ENCODE measurements at regions of chr11 and their contacts with region 1.

Region 1: GRCh38 chr11:3854977-3855807 is at the start of gene STIM1:
- DNase-seq: peak; percentile 94
- H3K27ac ChIP-seq: peak within 1 kb of the TSS; percentile 89
- CTCF ChIP-seq: peak; percentile 95

Region 2: GRCh38 chr11:3841426-3842350 is 13.5 kb before region 1 on chr11:
- CTCF ChIA-PET with region 1: interaction called, 11 read pairs
- POLR2A ChIA-PET with region 1: no interaction called
- DNase-seq: peak; percentile 66
- H3K27ac ChIP-seq: peak overlapping the region; percentile 93
- CTCF ChIP-seq: peak; percentile 87

Region 3: DNA sequence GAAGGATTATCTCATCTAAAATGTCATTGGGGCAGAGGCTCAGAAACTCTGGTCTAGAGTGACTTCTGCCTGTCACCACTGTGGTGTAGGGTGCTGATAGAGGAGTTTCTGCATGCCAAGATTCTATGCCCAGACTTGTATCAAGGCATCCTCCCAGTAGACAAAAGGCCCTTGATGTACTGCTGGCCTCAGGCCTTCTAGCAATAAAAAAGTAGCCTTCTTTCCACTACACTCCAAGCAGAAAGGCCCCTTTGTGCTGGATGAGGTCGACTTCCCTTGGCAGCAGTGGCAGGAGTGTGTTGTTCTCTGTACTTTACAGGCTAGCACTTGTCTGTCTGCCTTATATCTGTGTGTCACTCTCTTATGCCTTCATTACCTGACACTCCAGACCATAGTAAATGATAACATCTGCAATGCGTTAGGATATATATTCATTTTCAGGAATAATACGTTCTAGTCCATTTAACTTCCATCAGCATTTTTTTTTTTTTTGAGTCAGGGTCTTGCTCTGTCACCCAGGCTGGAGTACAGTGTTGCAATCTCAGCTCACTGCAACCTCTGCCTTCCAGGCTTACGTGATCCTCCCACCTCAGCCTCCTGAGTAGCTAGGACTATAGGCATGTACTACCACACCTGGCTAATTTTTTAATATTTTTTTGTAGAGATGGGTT is 189.9 kb after region 1 on chr11:
- CTCF ChIA-PET with region 1: interaction called, 18 read pairs
- POLR2A ChIA-PET with region 1: no interaction called
- DNase-seq: peak; percentile 40
- H3K27ac ChIP-seq: peak overlapping the region; percentile 60
- CTCF ChIP-seq: no peak

Region 4: DNA sequence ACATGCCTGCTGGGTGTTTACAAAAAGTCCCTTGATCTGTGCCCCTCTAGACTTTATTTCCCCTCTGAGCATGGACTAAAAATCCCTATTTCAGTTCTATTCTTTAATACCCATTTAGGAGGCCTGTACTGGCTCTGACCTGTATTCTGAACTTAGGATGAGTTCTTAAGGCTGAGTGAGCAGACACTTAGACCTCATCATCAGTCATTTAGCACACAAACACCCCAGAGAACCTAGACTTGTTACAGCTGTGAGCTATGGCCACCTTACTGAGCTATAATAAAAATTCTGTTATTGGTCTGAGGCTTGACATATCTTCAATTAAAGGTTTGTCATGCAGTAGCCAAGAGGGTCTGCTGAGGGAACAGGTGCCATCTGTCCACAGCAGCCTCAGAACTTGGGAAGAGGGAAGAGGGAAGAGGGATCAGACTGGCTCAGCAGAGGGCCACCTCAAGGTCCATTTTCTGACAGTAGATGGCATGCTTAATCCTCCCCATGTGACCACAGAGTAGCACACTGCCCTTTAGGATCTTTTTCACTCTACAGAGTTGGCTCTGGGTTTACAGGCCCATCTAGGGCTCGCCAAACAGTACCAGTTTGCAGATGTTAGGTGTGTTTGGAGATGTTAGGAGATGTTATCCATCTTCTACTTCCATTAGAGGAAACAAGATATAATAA is 209.2 kb after region 1 on chr11:
- CTCF ChIA-PET with region 1: interaction called, 13 read pairs
- POLR2A ChIA-PET with region 1: interaction called, 3 read pairs
- DNase-seq: no peak
- H3K27ac ChIP-seq: no peak overlapping the region
- CTCF ChIP-seq: no peak

Region 5: GRCh38 chr11:4072668-4073285 is 217.6 kb after region 1 on chr11:
- CTCF ChIA-PET with region 1: interaction called, 93 read pairs
- POLR2A ChIA-PET with region 1: interaction called, 8 read pairs
- DNase-seq: peak; percentile 67
- H3K27ac ChIP-seq: no peak overlapping the region
- CTCF ChIP-seq: peak; percentile 77

Region 6: GRCh38 chr11:4083198-4083597 is 228.0 kb after region 1 on chr11:
- CTCF ChIA-PET with region 1: interaction called, 12 read pairs
- POLR2A ChIA-PET with region 1: no interaction called
- DNase-seq: no peak
- H3K27ac ChIP-seq: no peak overlapping the region
- CTCF ChIP-seq: no peak